ENCODE measurements at regions of chr4 and their contacts with region 1.

Region 1: DNA sequence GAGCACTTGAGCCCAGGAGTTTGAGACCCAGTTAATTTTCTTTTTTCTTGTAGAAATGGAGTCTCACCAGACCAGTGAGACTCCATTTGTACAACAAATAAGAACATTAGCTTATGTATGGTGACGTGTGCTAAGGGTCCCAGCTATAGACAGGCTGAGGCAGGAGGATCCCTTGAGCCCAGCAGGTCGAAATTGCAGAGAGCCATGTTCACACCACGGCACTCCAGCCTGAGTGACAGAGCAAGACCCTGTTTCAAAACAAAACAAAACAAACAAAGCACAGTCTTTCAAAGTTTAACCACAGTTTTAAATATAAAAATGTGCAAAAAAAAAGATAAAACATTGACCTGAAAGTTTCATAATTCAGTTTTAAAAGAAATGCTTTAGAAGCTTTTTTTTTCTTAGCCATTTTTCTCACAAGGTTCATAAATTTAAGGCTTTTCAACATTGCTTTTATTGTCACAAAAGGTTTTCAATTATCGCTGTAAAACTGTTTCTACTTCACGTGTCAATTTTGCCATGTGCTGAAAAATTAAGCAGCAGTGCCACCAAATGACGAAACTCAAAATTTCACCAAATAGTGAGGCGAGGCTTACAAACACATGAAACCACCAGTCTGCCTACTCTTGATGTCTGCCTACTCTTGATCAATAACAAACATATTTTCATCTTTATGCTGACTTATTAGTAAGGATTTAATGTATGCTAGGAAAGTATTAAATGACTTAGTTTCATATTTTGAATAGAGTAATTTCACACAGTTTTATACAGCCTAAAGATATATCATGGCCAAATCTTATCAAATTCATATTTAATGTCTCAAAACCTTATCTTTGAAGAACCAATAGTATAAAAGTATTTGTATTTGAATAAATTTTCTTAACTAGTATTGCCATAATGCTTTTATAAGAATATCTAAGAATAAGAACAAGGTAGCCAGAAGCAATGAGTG is 126.3 kb downstream of the NEK1 start:
- DNase-seq: peak; percentile 56
- ATAC-seq: peak; percentile 60; the same call in 1 of the 2 replicates
- H3K4me3 ChIP-seq: no peak overlapping the region
- H3K27ac ChIP-seq: no peak overlapping the region
- H3K4me1 ChIP-seq: no peaks in the 10 kb centered on the region
- H3K27me3 ChIP-seq: no peaks in the 10 kb centered on the region
- CTCF ChIP-seq: peak; percentile 58; the same call in 1 of the 2 replicates

Region 2: DNA sequence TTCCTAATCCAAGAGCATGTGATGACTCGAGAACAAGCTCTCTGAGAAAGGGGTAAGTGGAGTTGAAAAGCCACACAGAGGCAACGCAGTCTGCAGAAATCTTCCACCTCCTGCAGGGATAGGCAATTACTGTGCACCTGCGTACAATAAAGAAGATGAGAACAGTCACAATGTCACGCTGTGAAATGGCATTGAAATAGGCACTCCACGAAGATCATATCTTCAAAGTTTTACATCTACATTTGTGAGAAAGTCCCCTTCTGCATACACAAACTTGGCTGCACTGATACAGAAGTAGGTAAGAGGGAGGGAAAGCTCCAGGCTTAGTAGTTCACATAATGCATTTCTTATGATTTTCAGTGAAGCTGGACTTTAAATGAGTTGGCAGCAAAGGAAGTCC is 1032.9 kb before region 1 on chr4:
- CTCF ChIA-PET with region 1: no interaction called
- POLR2A ChIA-PET with region 1: no interaction called
- in situ Hi-C with region 1: no loop called
- intact Hi-C with region 1: no loop called
- DNase-seq: no peak
- ATAC-seq: no peak
- H3K4me3 ChIP-seq: no peak overlapping the region
- H3K27ac ChIP-seq: no peak overlapping the region
- H3K4me1 ChIP-seq: no peaks in the 10 kb centered on the region; the same call in 1 of the 2 replicates
- H3K27me3 ChIP-seq: no peaks in the 10 kb centered on the region
- CTCF ChIP-seq: no peak

Region 3: GRCh38 chr4:168923526-168924194 is 562.4 kb before region 1 on chr4:
- CTCF ChIA-PET with region 1: no interaction called
- POLR2A ChIA-PET with region 1: interaction called, 3 read pairs
- in situ Hi-C with region 1: no loop called
- intact Hi-C with region 1: loop called (anchors 5 kb)
- DNase-seq: peak; percentile 25
- ATAC-seq: peak; percentile 87
- H3K4me3 ChIP-seq: no peak overlapping the region
- H3K27ac ChIP-seq: no peak overlapping the region
- H3K4me1 ChIP-seq: no peaks in the 10 kb centered on the region
- H3K27me3 ChIP-seq: no peaks in the 10 kb centered on the region
- CTCF ChIP-seq: peak; percentile 80

Region 4: GRCh38 chr4:169010125-169011023 is 475.7 kb before region 1 on chr4 and contains the start of gene CBR4:
- CTCF ChIA-PET with region 1: no interaction called
- POLR2A ChIA-PET with region 1: interaction called, 3 read pairs
- in situ Hi-C with region 1: no loop called
- intact Hi-C with region 1: loop called (anchors 5 kb)
- DNase-seq: peak; percentile 86
- ATAC-seq: peak; percentile 99
- H3K4me3 ChIP-seq: peak within 1 kb of the TSS; percentile 74 to 87
- H3K27ac ChIP-seq: peak within 1 kb of the TSS; percentile 89
- H3K4me1 ChIP-seq: peaks cover 11% of the 10 kb centered on the region; the same call in 1 of the 2 replicates
- H3K27me3 ChIP-seq: no peaks in the 10 kb centered on the region
- CTCF ChIP-seq: peak; percentile 32; the same call in 1 of the 2 replicates
- total RNA-seq, gene CBR4: 13.5 TPM

Region 5: DNA sequence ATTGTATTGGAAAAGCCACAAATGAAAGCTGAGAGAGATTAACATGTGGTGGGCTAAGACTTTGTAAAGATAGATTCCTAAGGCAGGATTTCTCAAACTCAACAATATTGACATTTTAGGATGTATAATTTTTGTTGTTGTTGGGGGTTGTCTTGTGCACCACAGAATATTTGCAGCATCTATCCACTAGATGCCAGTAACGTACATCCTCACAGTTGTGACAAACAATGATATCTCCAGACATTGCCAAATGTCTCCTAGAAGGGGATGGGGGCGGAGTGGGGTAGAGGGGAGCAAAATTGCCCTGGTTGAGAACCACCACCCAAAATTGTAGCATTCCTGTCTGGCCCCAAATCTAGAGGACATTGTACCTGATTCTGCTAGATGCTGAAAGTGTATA is 461.3 kb before region 1 on chr4:
- CTCF ChIA-PET with region 1: no interaction called
- POLR2A ChIA-PET with region 1: no interaction called
- in situ Hi-C with region 1: no loop called
- intact Hi-C with region 1: loop called (anchors 1 kb)
- DNase-seq: no peak
- ATAC-seq: peak; percentile 87
- H3K4me3 ChIP-seq: no peak overlapping the region
- H3K27ac ChIP-seq: no peak overlapping the region
- H3K4me1 ChIP-seq: no peaks in the 10 kb centered on the region; the same call in 1 of the 2 replicates
- H3K27me3 ChIP-seq: no peaks in the 10 kb centered on the region
- CTCF ChIP-seq: peak; percentile 70

Region 6: GRCh38 chr4:169270810-169271691 is 215.0 kb before region 1 on chr4 and contains the start of gene SH3RF1:
- CTCF ChIA-PET with region 1: no interaction called
- POLR2A ChIA-PET with region 1: no interaction called
- in situ Hi-C with region 1: no loop called
- intact Hi-C with region 1: loop called (anchors 5 kb)
- DNase-seq: no peak
- ATAC-seq: peak; percentile 93
- H3K4me3 ChIP-seq: peak within 1 kb of the TSS; percentile 79 to 81
- H3K27ac ChIP-seq: peak within 1 kb of the TSS; percentile 77
- H3K4me1 ChIP-seq: peaks cover 24% of the 10 kb centered on the region
- H3K27me3 ChIP-seq: no peaks in the 10 kb centered on the region
- CTCF ChIP-seq: peak; percentile 64
- total RNA-seq, gene SH3RF1: 11.5 TPM

Measured in Panc1 (cell line).